HEK293T (cell line): ENCODE measurements at regions of chr19 and their contacts with region 1.

Region 1: GRCh38 chr19:45692187-45693105 is at the start of gene QPCTL:
- DNase-seq: peak; percentile 91

Region 2: GRCh38 chr19:45542234-45542668 is 150.2 kb before region 1 on chr19:
- CTCF ChIA-PET with region 1: no interaction called
- POLR2A ChIA-PET with region 1: no interaction called
- DNase-seq: no peak

Region 3: GRCh38 chr19:45558399-45558878 is 134.0 kb before region 1 on chr19:
- CTCF ChIA-PET with region 1: no interaction called
- POLR2A ChIA-PET with region 1: no interaction called
- DNase-seq: peak; percentile 81

Region 4: GRCh38 chr19:45670670-45671453 is 21.6 kb before region 1 on chr19:
- CTCF ChIA-PET with region 1: interaction called, 4 read pairs
- POLR2A ChIA-PET with region 1: interaction called, 64 read pairs
- DNase-seq: peak; percentile 100

Region 5: DNA sequence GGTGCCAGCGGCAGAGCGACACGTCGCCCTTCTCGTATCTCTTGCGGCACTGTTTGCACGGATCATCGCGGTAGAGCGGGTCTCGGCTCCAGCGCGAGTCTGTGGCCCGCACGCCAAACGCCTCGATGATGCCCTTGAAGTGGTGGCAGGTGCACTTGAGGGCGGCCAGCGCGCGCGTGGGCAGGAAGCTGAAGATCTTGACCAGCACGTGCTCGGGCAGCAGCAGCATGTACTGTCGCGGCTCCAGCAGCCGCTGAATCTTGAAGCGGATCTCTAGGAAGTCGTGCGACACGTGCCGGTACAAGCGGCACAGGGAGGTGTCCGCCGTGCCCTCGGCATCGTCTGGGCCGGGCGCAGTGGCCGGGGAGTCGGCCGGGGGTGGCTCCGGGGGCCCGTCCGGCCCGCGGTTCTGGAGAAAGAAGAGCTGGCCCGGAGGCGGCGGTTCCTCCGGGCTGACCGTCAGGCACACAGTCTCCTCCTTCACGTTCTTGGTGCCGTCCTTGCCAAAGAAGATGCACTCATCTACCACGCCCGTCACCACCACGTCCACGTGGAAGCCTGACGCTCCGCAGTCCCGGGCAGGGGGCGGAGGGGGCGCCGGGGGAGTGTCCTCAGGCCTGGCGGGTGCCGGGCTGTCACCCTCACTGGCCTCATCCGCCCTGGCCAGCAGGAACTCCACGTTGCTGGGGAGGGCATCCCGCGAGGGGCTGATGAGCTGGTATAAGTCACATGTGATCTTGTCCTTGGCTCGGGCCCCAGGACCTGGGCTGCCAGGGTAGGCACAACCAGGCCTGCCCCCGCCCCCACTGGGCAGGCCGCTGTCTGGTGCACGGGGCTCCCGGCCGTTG is 19.6 kb after region 1 on chr19:
- CTCF ChIA-PET with region 1: interaction called, 7 read pairs
- POLR2A ChIA-PET with region 1: interaction called, 41 read pairs
- DNase-seq: no peak

Region 6: DNA sequence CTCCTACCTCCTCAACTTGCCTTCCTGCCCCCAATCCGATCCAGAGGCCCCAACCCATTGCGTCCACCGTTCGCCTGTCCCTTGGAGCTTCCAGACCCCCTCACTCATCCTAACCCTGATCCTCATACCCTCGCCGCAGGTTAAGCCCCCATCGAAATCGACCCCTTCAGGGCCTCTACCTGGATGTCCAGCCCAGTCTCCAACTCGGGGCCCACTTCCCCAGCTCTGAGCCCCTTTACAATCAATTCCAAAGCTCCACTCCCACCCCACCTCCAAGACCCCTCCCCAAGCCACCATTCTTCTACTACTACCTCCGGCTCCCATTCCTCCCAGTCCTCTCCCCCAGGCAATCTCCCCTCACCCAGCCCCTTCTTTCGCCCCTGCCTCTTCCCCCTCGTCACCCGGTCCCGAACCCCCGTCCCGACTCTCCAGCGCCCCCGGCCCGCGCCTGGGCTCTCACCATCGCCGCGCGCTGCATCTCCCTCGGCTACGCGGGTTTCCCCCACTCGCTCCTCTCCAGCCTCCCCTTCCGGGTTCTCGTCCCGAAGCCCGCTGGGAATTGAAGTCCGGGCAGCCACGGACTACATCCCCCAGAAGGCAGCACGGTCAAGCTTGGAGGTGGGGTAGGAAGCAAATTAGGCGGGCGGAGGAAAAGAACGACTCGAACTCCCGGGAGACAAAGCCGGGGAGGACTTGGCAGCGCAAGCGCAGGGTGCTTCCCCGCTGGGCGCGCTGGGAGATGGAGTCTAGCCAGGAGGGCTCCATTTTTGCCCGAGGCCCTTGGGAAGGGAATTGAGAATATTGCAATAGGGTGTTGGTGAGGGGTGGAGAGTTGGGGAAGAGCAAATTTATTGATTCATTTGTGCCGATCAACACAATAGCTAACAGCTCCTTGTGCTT is 38.2 kb after region 1 on chr19 and contains the start of gene FBXO46:
- CTCF ChIA-PET with region 1: interaction called, 12 read pairs
- POLR2A ChIA-PET with region 1: interaction called, 12 read pairs
- DNase-seq: peak; percentile 96

Region 7: DNA sequence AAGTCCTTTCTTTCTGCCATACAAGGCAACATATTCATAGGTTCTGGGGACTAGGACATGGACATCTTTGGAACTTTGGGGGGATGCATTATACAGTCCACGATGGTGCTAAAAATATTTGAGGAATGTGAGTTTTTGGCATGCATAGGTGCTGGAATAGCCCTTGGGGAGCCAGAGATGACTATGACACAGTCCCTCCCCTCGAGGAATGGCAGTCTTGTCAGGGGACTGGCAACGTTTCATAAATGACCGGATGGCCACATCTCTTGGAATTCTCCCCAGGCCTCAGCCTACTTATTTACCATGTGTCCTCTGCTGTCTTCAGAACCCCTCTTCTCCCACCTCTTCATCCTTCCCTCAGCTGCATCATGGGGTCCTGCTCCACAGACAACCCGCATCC is 54.4 kb after region 1 on chr19:
- CTCF ChIA-PET with region 1: no interaction called
- POLR2A ChIA-PET with region 1: no interaction called
- DNase-seq: no peak

Region 8: DNA sequence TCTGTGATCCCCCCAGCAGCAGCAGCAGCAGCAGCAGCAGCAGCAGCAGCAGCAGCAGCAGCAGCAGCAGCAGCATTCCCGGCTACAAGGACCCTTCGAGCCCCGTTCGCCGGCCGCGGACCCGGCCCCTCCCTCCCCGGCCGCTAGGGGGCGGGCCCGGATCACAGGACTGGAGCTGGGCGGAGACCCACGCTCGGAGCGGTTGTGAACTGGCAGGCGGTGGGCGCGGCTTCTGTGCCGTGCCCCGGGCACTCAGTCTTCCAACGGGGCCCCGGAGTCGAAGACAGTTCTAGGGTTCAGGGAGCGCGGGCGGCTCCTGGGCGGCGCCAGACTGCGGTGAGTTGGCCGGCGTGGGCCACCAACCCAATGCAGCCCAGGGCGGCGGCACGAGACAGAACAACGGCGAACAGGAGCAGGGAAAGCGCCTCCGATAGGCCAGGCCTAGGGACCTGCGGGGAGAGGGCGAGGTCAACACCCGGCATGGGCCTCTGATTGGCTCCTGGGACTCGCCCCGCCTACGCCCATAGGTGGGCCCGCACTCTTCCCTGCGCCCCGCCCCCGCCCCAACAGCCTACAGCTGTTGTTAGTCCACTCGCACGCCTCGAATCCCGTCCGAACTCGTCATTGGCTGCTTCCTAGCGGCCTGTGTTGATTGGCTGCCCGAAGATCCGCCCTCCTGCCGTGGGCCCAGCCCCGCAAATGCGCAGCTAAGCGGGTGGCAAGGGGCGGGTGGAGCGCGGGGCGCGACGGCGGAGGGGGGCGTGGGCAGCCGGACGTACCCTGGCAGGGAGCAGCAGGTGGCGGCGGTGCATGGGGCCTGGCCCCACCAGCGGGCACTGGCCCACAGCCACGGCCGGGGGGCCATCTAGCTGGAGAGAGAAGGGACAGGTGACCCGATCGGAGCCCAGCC is 78.0 kb after region 1 on chr19:
- CTCF ChIA-PET with region 1: interaction called, 5 read pairs
- POLR2A ChIA-PET with region 1: interaction called, 52 read pairs
- DNase-seq: peak; percentile 91